ENCODE measurements at regions of chr22 and their contacts with region 1.

Region 1: DNA sequence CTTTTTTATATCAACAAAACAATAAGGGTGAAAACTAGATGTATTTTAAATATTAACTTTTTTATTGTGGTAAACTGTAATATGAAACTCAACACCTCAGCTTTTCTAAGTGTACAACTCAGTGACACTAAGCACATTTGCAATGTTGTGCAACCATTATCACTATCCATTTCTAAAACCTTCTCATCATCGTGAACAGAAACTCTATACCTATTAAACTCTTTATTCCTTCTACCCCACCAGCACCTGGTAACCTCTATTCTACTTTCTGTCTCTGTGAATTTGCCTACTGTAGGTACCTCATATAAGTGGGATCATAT is 9.4 kb downstream of the HORMAD2 start:
- DNase-seq: no peak
- H3K4me3 ChIP-seq: no peak overlapping the region
- H3K27me3 ChIP-seq: no peaks in the 10 kb centered on the region
- CTCF ChIP-seq: no peak

Region 2: DNA sequence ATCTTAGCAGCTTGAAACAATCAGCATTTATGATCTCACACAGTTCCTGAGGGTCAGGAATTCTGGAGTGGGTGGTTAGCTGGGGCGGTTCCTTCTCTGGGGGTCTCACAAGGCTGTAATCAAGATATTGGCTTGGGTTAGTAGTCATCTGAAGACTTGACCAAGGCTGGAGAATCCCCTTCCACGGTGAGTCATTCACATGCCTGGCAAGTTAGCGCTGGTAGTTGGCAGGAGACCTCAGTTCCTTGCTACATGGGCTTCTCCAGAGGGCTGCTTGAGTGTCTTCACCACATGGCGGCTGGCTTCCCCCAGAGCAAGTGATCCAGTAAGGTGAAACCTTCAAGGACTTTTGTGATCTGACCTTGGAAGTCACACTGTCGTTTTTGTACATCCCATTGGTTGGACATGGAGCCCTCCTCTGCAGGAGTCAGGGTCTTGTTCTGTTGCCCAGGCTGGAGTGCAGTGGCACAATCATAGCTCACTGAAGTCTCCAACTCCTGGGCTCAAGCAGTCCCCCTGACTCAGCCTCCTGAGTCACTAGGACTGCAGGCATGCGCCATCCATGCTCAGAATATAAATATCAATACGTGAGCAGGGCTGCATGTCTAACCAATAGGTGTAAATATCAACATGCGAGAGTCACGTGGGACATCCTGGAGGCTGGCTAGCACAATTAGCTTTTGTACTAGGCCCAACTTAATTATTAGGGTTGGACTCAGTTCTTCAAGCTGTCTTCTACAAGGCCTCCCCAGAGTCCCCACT is 501.5 kb before region 1 on chr22:
- CTCF ChIA-PET with region 1: interaction called, 10 read pairs
- POLR2A ChIA-PET with region 1: no interaction called
- DNase-seq: peak; percentile 32
- H3K4me3 ChIP-seq: no peak overlapping the region
- H3K27me3 ChIP-seq: no peaks in the 10 kb centered on the region
- CTCF ChIP-seq: no peak

Region 3: DNA sequence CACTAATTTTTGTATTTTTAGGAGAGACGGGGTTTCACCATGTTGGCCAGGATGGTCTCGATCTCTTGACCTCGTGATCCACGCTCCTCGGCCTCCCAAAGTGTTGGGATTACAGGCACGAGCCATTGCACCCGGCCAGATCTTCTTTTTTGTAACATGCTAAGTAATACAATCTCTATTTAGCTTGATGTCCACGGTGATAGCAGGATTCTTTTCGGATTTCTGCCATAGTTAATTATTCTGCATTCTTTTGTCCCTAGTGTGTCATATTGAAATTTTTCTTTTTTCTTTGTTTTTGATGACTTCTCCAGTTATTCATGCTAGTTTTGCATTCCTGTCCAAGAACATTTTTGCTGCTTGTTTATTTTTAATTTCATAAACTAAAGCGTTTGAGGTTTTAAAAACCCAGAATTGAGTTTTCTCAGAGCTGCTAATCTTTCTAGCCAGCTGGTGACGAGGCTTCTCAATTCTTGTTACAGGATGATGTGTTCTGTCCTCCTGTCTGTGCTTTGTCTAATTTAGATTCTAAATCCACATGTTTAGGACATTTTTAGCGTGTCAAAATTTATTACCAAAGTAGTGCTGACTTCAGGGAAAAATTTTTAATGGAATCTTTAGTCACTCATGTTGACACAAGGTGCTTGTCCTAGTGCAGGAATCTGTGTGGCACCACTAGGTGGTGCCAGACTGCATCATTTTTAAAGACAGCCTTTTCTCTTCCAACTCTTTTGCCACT is 464.4 kb before region 1 on chr22:
- CTCF ChIA-PET with region 1: interaction called, 27 read pairs
- POLR2A ChIA-PET with region 1: no interaction called
- DNase-seq: peak; percentile 55
- H3K4me3 ChIP-seq: no peak overlapping the region
- H3K27me3 ChIP-seq: no peaks in the 10 kb centered on the region
- CTCF ChIP-seq: peak; percentile 88

Region 4: DNA sequence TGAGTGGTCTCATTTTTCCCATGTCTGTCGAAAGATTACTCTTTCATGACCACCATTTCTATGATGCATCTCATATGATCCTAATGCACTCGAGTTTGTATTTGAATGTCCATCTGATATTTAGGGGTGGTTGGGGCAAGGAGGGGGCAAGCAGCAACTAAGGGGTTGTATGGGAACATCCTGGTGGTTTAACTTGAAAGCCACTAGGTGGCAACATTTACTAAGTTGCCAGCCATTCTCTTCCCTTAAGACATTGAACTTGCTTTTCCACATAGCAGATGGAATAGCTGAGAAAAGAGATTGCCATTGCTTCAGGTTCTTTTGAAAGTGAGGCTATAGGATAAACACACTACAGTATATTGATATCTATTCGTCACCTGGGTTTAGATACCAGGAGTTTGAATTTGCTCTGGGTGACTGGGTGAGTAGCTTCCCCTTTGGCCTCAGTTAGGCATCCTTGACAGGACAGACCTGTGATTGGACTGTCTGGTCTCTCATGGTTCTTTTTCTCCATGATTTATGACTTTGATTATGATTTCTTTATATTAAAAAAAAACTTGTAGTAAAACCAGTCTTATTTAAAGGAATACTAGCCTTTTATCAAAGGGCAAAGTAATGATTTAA is 453.8 kb before region 1 on chr22:
- CTCF ChIA-PET with region 1: interaction called, 23 read pairs
- POLR2A ChIA-PET with region 1: no interaction called
- DNase-seq: no peak
- H3K4me3 ChIP-seq: no peak overlapping the region
- H3K27me3 ChIP-seq: no peaks in the 10 kb centered on the region
- CTCF ChIP-seq: peak; percentile 75

Region 5: DNA sequence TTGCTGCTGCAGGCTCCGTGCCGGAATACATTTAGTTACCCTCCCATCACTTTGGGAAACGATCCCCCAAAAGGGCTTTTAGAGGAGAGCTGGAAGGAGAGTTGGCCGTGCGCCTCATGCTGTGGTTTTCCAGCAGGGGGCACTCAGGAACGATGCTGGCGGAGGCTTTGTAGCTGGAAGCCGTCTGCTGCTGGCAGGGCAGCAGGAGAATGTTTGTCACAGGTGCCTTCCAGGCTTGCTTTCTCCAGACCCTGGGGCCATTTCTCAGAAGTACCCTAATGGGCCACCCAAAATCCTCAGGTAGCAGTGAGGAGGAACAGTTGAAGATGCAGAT is 399.8 kb before region 1 on chr22:
- CTCF ChIA-PET with region 1: interaction called, 19 read pairs
- POLR2A ChIA-PET with region 1: no interaction called
- DNase-seq: no peak
- H3K4me3 ChIP-seq: no peak overlapping the region
- H3K27me3 ChIP-seq: no peaks in the 10 kb centered on the region
- CTCF ChIP-seq: peak; percentile 84

Region 6: GRCh38 chr22:29979777-29980321 is 109.8 kb before region 1 on chr22:
- CTCF ChIA-PET with region 1: no interaction called
- POLR2A ChIA-PET with region 1: no interaction called
- DNase-seq: peak; percentile 25
- H3K4me3 ChIP-seq: no peak overlapping the region
- H3K27me3 ChIP-seq: no peaks in the 10 kb centered on the region
- CTCF ChIP-seq: no peak

Region 7: GRCh38 chr22:30077279-30077880 is 12.2 kb before region 1 on chr22:
- CTCF ChIA-PET with region 1: interaction called, 11 read pairs
- POLR2A ChIA-PET with region 1: no interaction called
- DNase-seq: no peak
- H3K4me3 ChIP-seq: no peak overlapping the region
- H3K27me3 ChIP-seq: peaks cover 10% of the 10 kb centered on the region
- CTCF ChIP-seq: no peak

Measured in BJ (cell line).